Activated T-helper 1 cell treated with anti-CD3 and anti-CD28 coated beads, Interleukin-12 subunit alpha, Interleukin-12 subunit beta, Interleukin-2, Interleukin-4 antibody, amounts not matched to agents 30 ng/mL and 10 ng/mL and 1 ng/mL, durations not matched to agents 14 hours and 24 hours and 36 hours (primary cell): ENCODE measurements at regions of chr3 and their contacts with region 1.

Region 1: DNA sequence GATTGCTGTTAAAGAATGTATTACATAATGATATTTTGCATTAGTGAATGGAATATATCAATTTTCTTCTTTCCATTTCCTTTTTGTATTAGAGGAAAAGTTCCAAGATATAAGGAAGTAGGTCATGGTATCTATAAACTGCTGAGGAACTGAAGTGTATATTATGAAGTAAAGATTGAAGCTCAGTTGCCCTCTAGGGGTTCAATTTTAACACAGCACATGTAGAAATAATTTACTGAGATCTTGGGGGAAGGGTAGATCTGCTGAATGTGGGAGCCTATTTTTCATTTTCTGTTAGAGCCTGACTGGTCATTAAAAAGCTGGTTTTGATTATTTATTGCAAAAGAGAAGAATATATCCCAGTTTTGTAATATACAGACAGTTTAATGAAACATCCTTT is 45.2 kb downstream of the CMC1 start:
- DNase-seq: no peak
- H3K4me3 Mint-ChIP-seq: no peak overlapping the region
- H3K27ac Mint-ChIP-seq: no peak overlapping the region
- H3K4me1 Mint-ChIP-seq: peaks cover 23% of the 10 kb centered on the region
- H3K27me3 Mint-ChIP-seq: no peaks in the 10 kb centered on the region

Region 2: DNA sequence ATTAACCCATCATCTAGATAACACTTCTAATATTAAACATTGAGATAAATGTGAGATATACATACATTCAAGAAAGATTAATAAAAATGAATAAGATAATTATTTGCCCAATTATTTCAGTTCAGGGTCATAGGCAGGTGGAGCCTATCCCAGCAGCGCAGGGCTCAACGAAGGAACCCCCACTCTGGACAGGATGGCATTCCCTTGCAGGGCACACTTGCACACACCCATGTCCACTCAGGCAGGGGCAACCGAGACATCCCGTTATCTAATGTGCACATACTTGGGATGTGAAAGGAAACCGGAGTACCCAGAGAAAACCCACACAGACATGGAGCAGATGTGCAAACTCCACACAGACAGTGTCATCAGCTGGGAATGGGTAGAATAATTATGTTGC is 220.6 kb before region 1 on chr3:
- intact Hi-C with region 1: no loop called
- DNase-seq: no peak
- H3K4me3 Mint-ChIP-seq: no peak overlapping the region
- H3K27ac Mint-ChIP-seq: no peak overlapping the region
- H3K4me1 Mint-ChIP-seq: no peaks in the 10 kb centered on the region
- H3K27me3 Mint-ChIP-seq: no peaks in the 10 kb centered on the region

Region 3: DNA sequence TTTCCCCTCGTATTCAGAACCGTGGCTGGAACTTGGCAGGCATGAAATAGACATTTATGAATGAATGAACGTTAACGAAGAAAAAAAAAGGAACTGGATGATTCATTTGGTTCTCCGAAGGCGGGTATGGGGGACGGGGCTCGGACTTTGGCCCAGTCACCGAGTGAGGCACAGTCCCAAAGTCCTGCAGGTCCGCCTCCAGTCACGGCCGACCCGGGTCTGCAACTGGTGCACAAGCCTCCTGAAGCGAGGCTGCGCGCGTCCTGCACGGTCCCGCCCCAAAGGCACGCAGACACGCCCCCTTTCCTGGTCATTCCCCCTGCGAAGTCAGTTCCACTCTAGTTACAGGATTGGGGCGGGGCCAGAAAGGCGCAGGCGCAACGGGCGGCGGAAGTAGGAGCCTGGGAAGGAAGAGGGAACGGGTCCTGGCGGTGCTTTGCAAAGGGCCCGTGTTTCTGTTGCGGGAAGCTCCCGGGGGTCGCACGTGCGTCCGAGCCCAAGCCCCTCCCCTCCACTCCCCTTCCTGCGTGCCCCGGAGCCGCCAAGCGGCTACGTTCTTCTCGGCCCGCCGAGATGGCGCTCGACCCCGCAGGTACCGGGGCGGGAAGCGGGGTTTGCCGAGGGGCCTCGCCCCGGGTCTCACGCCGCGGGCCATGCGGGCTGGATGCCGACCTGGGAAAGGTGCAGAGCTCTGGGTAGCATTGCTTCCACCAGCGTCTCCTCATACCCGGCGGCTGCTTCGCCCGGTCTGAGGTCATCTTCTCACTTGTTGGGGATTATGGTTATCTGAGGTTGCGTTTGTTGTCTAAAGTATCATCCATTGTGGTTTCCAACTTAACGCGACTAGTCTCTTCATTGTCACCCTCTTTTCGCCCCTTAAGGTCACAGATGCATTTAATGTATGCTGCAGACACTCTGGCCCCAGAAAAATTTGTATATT is 45.1 kb before region 1 on chr3 and contains the start of gene CMC1:
- intact Hi-C with region 1: loop called (anchors 2 kb)
- DNase-seq: peak; percentile 87
- H3K4me3 Mint-ChIP-seq: peak within 1 kb of the TSS; percentile 94
- H3K27ac Mint-ChIP-seq: peak within 1 kb of the TSS; percentile 96
- H3K4me1 Mint-ChIP-seq: peaks cover 37% of the 10 kb centered on the region
- H3K27me3 Mint-ChIP-seq: no peaks in the 10 kb centered on the region
- total RNA-seq, gene CMC1: 29.5 and 32.5 TPM in 2 replicates

Region 4: GRCh38 chr3:28301688-28302087 is 15.1 kb after region 1 on chr3:
- intact Hi-C with region 1: no loop called
- DNase-seq: no peak
- H3K4me3 Mint-ChIP-seq: no peak overlapping the region
- H3K27ac Mint-ChIP-seq: no peak overlapping the region
- H3K4me1 Mint-ChIP-seq: no peaks in the 10 kb centered on the region
- H3K27me3 Mint-ChIP-seq: no peaks in the 10 kb centered on the region